ENCODE measurements at regions of chr4 and their contacts with region 1.

Region 1: DNA sequence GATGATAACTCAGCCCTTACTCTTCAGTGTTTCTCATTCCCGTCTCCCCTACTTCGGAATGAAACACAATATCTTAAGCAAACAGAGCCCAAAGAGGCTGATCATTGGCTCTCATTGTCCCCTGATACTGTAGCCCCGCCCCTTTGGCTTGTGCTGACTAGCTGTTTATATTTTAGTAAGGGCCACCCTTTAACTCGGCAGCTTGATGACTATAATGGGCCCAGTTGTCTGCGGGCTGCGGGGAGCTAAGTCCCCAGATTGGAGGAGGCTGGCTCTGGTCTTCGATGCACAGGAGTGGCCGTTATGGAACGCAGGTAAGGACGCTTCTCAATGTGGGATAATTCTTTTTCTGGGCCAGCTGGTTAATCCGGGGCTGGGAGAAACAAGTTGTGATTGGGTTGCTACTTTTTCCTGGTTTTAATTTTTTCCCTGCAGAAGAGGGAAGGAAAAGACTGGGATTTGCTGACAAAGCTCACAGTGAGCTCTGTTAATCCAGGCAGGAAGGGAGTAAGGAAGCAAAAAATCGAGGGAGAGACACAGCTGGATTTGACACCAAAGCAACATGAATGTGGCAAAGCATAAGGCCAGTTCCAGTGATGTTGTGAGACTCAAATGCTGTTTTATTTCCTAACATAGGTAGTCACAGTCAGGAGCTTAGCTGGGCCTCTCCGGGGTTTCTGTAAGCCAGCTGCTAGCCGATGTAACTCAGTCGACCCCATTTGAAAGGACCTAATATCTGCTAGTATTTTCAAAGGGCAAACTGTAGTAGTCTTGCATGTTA is at the start of gene TRIM2:
- DNase-seq: peak; percentile 81
- H3K4me3 Mint-ChIP-seq: peak within 1 kb of the TSS; percentile 86
- H3K27ac Mint-ChIP-seq: peak within 1 kb of the TSS; percentile 92
- H3K4me1 Mint-ChIP-seq: peaks cover 22% of the 10 kb centered on the region
- H3K27me3 Mint-ChIP-seq: no peaks in the 10 kb centered on the region
- CTCF ChIP-seq: no peak
- total RNA-seq, gene TRIM2: 35.5 and 49.6 TPM in 2 replicates

Region 2: GRCh38 chr4:153142700-153143438 is 61.6 kb before region 1 on chr4:
- CTCF ChIA-PET with region 1: interaction called, 21 read pairs
- intact Hi-C with region 1: loop called (anchors 2 kb)
- DNase-seq: peak; percentile 75
- H3K4me3 Mint-ChIP-seq: peak overlapping the region; percentile 58
- H3K27ac Mint-ChIP-seq: peak overlapping the region; percentile 95
- H3K4me1 Mint-ChIP-seq: peaks cover 62% of the 10 kb centered on the region
- H3K27me3 Mint-ChIP-seq: no peaks in the 10 kb centered on the region
- CTCF ChIP-seq: peak; percentile 62

Region 3: GRCh38 chr4:153153339-153153871 is 51.0 kb before region 1 on chr4:
- CTCF ChIA-PET with region 1: interaction called, 3 read pairs
- intact Hi-C with region 1: loop called (anchors 2 kb)
- DNase-seq: peak; percentile 60
- H3K4me3 Mint-ChIP-seq: peak overlapping the region; percentile 87
- H3K27ac Mint-ChIP-seq: peak overlapping the region; percentile 73
- H3K4me1 Mint-ChIP-seq: peaks cover 23% of the 10 kb centered on the region
- H3K27me3 Mint-ChIP-seq: no peaks in the 10 kb centered on the region
- CTCF ChIP-seq: no peak

Measured in Calu3 (cell line).